ENCODE measurements at regions of chr11 and their contacts with region 1.

Region 1: DNA sequence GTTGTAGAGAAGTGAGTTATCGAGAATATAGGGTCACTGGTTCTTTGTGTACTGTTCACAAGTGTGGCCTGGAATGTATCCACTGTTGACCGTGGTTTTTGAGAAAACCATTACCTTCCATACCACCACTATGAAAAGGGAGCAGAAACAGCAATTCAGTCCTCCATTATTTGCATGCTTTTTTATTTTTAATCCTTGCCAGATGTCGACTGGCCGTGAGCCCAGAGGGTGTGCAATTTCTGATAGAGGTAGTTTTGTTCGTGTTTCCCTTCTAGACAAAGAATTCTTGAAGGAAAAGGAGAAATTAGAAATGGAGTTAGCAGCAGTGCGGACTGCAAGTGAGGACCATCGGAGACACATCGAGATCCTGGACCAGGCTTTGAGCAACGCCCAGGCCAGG is 81.7 kb downstream of the AMOTL1 start:
- DNase-seq: peak in 1 of 2 donors; percentile 24
- ATAC-seq: peak in 1 of 8 donors; percentile 31
- H3K4me3 ChIP-seq: no peak overlapping the region
- H3K27ac ChIP-seq: peak overlapping the region in 1 of 10 donors; percentile 20
- H3K4me1 ChIP-seq: peaks cover 0 to 25% (median 8%) of the 10 kb centered on the region in 9 donors
- H3K27me3 ChIP-seq: no peaks in the 10 kb centered on the region
- CTCF ChIP-seq: no peak

Region 2: GRCh38 chr11:94876645-94877442 is 27.0 kb after region 1 on chr11:
- intact Hi-C with region 1: no loop called
- DNase-seq: peak; percentile 62 to 84
- ATAC-seq: peak; percentile 81 to 97 (median 95)
- H3K4me3 ChIP-seq: no peak overlapping the region
- H3K27ac ChIP-seq: peak overlapping the region in 8 of 10 donors; percentile 59 to 79 (median 68)
- H3K4me1 ChIP-seq: peaks cover 3 to 36% (median 18%) of the 10 kb centered on the region in 9 donors
- H3K27me3 ChIP-seq: no peaks in the 10 kb centered on the region
- CTCF ChIP-seq: peak in 6 of 9 donors; percentile 30 to 61 (median 46)

Region 3: GRCh38 chr11:94897330-94897768 is 47.5 kb after region 1 on chr11:
- intact Hi-C with region 1: loop called in 1 of 10 experiments (anchors 5 kb)
- DNase-seq: peak in 1 of 2 donors; percentile 59
- ATAC-seq: peak in 3 of 8 donors; percentile 42 to 62 (median 55)
- H3K4me3 ChIP-seq: no peak overlapping the region
- H3K27ac ChIP-seq: peak overlapping the region in 1 of 10 donors; percentile 4
- H3K4me1 ChIP-seq: peaks cover 0 to 9% (median 0%) of the 10 kb centered on the region in 9 donors
- H3K27me3 ChIP-seq: no peaks in the 10 kb centered on the region
- CTCF ChIP-seq: peak; percentile 77 to 96 (median 89)